Gastrocnemius medialis (tissue), 4 donors: ENCODE measurements at regions of chr17 and their contacts with region 1.

Region 1: GRCh38 chr17:35540589-35541404 is 3.3 kb upstream of the SLFN12L start:
- DNase-seq: peak; percentile 15 to 30
- ATAC-seq: peak in 1 of 2 donors; percentile 40
- H3K4me3 ChIP-seq: peak overlapping the region; percentile 26 to 39 (median 35)
- H3K27ac ChIP-seq: peak overlapping the region; percentile 46 to 67 (median 52)
- H3K4me1 ChIP-seq: peaks cover 0 to 17% of the 10 kb centered on the region in 2 donors
- H3K27me3 ChIP-seq: no peaks in the 10 kb centered on the region
- CTCF ChIP-seq: no peak
- POLR2A ChIP-seq: no peak

Region 2: DNA sequence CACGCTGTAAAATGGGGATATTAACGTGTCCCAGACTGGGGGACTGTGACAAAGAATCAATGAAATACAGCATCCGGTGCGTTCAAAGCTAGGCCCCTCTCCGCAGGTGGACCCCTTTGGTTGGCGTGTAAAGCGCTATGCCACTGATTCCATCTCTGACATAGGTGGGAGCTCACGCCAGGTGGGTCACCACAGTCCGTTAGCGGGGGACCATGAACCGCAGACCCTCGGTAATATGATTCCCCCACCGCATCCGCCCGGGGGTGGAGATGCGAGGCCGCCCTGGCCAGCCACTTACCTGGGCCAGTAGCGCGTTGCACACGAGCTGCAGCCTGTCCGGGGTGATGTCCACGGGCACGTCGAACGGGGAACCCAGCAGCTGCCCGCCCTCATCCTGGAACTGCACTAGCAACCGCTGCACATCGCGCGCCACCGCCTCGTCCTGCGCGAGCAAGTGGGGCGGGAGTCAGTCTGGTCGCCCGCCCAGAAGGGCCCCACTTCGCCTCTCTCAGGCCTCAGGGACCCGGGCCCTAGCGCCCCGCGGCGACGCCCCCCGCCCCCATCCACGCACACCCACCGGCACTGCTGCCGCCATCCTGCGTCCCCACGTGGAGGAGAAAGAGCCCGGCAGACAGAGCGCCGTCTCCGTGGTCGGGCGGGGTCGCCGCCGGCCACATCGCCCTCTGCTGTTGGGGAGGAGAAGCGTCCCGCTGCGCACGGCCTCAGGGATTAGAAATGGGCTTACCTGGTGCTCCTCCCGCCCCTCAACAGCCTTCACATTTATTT is 398.9 kb before region 1 on chr17 and contains the start of gene NLE1:
- in situ Hi-C with region 1: no loop called
- intact Hi-C with region 1: loop called (anchors 10 kb)
- DNase-seq: peak; percentile 68
- ATAC-seq: peak; percentile 77 to 84
- H3K4me3 ChIP-seq: peak within 1 kb of the TSS; percentile 76 to 99 (median 88)
- H3K27ac ChIP-seq: peak within 1 kb of the TSS; percentile 12 to 49 (median 40)
- H3K4me1 ChIP-seq: peaks cover 15 to 23% of the 10 kb centered on the region in 2 donors
- H3K27me3 ChIP-seq: no peaks in the 10 kb centered on the region
- CTCF ChIP-seq: peak; percentile 82 to 97 (median 87)
- POLR2A ChIP-seq: no peak
- total RNA-seq, gene NLE1: 9.9 to 19.3 (median 11.5) TPM

Region 3: GRCh38 chr17:35154196-35155165 is 386.3 kb before region 1 on chr17:
- in situ Hi-C with region 1: loop called in 1 of 4 experiments (anchors 10 kb)
- intact Hi-C with region 1: loop called (anchors 10 kb)
- DNase-seq: no peak
- ATAC-seq: no peak
- H3K4me3 ChIP-seq: no peak overlapping the region
- H3K27ac ChIP-seq: no peak overlapping the region
- H3K4me1 ChIP-seq: peaks cover 8 to 12% of the 10 kb centered on the region in 2 donors
- H3K27me3 ChIP-seq: no peaks in the 10 kb centered on the region
- CTCF ChIP-seq: no peak
- POLR2A ChIP-seq: no peak

Region 4: GRCh38 chr17:35170968-35171771 is 369.6 kb before region 1 on chr17:
- in situ Hi-C with region 1: loop called in 3 of 4 experiments (anchors 5 to 10 kb)
- intact Hi-C with region 1: loop called (anchors 2 kb)
- DNase-seq: no peak
- ATAC-seq: no peak
- H3K4me3 ChIP-seq: no peak overlapping the region
- H3K27ac ChIP-seq: no peak overlapping the region
- H3K4me1 ChIP-seq: no peaks in the 10 kb centered on the region
- H3K27me3 ChIP-seq: no peaks in the 10 kb centered on the region
- CTCF ChIP-seq: peak in 3 of 5 experiments; percentile 3 to 26 (median 19)
- POLR2A ChIP-seq: no peak

Region 5: GRCh38 chr17:35312790-35313711 is 227.7 kb before region 1 on chr17:
- in situ Hi-C with region 1: loop called in 2 of 4 experiments (anchors 5 kb)
- intact Hi-C with region 1: loop called (anchors 1 kb)
- DNase-seq: peak; percentile 53 to 58
- ATAC-seq: peak; percentile 64 to 86
- H3K4me3 ChIP-seq: peak overlapping the region; percentile 52 to 69 (median 56)
- H3K27ac ChIP-seq: peak overlapping the region; percentile 79 to 88 (median 85)
- H3K4me1 ChIP-seq: peaks cover 18 to 39% of the 10 kb centered on the region in 2 donors
- H3K27me3 ChIP-seq: no peaks in the 10 kb centered on the region
- CTCF ChIP-seq: peak; percentile 67 to 85 (median 80)
- POLR2A ChIP-seq: peak; percentile 18 to 72

Region 6: GRCh38 chr17:35448214-35448898 is 92.4 kb before region 1 on chr17 and contains the start of gene SLFN13:
- in situ Hi-C with region 1: loop called in 1 of 4 experiments (anchors 25 kb)
- intact Hi-C with region 1: no loop called
- DNase-seq: peak; percentile 9 to 30
- ATAC-seq: peak in 1 of 2 donors; percentile 23
- H3K4me3 ChIP-seq: peak within 1 kb of the TSS; percentile 51 to 74 (median 60)
- H3K27ac ChIP-seq: peak within 1 kb of the TSS in 3 of 4 donors; percentile 32 to 47 (median 39)
- H3K4me1 ChIP-seq: peaks cover 3 to 5% of the 10 kb centered on the region in 2 donors
- H3K27me3 ChIP-seq: peaks cover 28 to 44% (median 32%) of the 10 kb centered on the region in 3 donors
- CTCF ChIP-seq: no peak
- POLR2A ChIP-seq: peak in 1 of 2 donors; percentile 13
- total RNA-seq, gene SLFN13: 0.05 to 1.2 (median 0.32) TPM

Region 7: DNA sequence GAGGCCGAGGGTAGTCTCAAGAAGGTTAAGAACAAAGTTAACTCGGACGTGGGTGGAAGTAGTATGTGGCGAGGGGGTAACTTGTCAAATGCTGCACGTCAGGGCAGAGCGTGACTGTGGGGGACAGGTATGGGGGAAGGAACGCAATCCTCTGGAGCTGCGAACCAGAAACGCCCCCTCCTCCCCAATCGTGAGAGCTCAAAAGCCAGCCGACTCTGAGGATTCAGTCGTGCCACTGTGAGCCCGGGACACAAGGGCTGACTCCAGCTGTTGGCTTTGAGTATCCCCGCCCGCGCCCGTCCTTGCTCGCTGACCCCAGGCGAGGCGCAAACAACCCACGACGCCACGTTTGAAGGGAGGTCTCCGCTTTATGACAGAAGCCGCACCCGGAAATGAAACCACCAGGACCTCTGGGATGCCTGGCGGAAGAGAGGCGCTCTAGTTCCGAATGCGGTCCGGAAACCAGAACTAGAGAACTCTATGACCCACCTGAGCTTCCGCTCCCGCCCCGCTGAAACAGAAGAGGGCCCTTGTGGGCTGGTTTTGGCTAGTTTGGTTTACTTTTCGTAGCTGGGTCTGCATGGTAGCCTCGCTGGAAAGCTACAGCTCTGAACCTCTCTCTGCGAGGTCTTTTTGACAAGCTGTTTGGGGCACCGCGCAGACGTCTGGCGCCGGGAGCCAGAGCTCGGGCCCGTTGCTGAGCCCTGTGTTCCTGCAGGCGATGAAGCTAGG is 37.6 kb after region 1 on chr17 and contains the start of gene PEX12:
- in situ Hi-C with region 1: no loop called
- intact Hi-C with region 1: no loop called
- DNase-seq: peak; percentile 87 to 91
- ATAC-seq: peak; percentile 98 to 100
- H3K4me3 ChIP-seq: peak within 1 kb of the TSS; percentile 68 to 88 (median 80)
- H3K27ac ChIP-seq: peak within 1 kb of the TSS; percentile 85 to 94 (median 90)
- H3K4me1 ChIP-seq: peaks cover 18 to 24% of the 10 kb centered on the region in 2 donors
- H3K27me3 ChIP-seq: no peaks in the 10 kb centered on the region
- CTCF ChIP-seq: peak in 1 of 5 experiments; percentile 15
- POLR2A ChIP-seq: peak; percentile 70 to 84
- total RNA-seq, gene PEX12: 4.4 to 14.2 (median 6.2) TPM